OCI-LY7 (cell line): ENCODE measurements at regions of chr1 and their contacts with region 1.

Region 1: GRCh38 chr1:156876281-156876680 is 15.6 kb downstream of the NTRK1 start:
- DNase-seq: no peak
- H3K4me3 ChIP-seq: no peak overlapping the region
- H3K27ac ChIP-seq: no peak overlapping the region
- H3K4me1 ChIP-seq: no peaks in the 10 kb centered on the region
- CTCF ChIP-seq: no peak

Region 2: DNA sequence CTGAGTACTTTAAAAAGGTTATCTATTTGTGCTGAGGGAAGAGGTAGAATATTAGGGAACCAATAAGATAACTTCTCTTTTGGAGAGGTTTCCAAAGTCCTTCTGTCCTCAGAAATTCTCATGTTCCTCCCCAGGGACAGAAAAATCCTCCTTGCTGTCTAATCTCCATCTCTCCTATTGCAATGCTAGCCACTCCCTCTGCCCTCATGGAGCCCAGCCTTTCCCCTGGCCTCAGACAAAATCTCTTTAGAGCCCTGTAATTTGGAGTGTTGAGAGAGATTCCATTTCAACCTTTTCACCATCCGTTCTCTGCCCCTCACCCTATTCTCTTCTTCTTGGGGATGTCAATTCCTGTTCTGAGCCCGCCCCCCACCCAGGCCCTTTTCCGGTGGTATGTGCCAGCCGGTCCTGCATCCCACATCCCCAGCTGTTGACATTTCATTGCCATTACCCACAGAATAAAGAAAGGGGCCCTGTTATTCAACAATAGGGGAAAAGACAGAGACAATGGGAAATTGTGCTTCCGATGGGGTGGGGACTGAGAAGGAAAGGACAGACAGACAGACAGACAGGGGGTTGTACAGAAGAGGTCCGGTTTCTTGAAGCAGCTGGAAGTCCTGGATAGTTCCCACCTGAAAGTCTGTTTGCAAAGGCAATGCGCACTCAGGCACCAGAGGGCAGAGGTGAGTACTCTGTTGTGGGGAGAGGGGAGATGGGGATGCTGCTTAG is 257.3 kb before region 1 on chr1 and contains the start of gene HAPLN2:
- CTCF ChIA-PET with region 1: interaction called, 15 read pairs
- POLR2A ChIA-PET with region 1: no interaction called
- intact Hi-C with region 1: no loop called
- DNase-seq: peak; percentile 45
- H3K4me3 ChIP-seq: no peak within 1 kb of the TSS
- H3K27ac ChIP-seq: no peak within 1 kb of the TSS
- H3K4me1 ChIP-seq: no peaks in the 10 kb centered on the region
- CTCF ChIP-seq: peak; percentile 78
- total RNA-seq, gene HAPLN2: 0.41 and 0.62 TPM in 2 replicates

Region 3: DNA sequence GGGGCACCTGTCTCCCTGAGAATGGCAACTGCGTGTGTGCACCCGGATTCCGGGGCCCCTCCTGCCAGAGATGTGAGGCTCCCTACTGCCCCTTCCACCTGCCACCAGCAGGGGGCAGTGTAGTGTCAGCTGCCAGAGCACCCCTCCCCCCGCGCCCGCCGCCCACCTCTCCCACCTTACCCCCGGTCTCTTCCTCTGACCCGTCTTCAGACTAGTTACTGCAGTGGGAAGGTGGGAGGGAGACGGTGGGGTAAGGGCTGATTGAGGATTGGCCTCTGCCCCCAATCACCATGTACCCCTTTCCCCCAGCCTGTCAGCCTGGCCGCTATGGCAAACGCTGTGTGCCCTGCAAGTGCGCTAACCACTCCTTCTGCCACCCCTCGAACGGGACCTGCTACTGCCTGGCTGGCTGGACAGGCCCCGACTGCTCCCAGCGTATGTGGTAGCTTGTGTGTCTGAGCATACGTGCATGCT is 34.1 kb after region 1 on chr1:
- CTCF ChIA-PET with region 1: no interaction called
- POLR2A ChIA-PET with region 1: no interaction called
- intact Hi-C with region 1: no loop called
- DNase-seq: peak; percentile 50
- H3K4me3 ChIP-seq: no peak overlapping the region
- H3K27ac ChIP-seq: no peak overlapping the region
- H3K4me1 ChIP-seq: no peaks in the 10 kb centered on the region
- CTCF ChIP-seq: peak; percentile 83